Posterior cingulate gyrus (tissue), 11 donors: ENCODE measurements at regions of chr19 and their contacts with region 1.

Region 1: GRCh38 chr19:50777754-50778303 is 7.6 kb downstream of the GPR32 start:
- DNase-seq: peak in 1 of 10 donors; percentile 81

Region 2: GRCh38 chr19:50368649-50369570 is 408.9 kb before region 1 on chr19:
- intact Hi-C with region 1: loop called (anchors 1 kb)
- DNase-seq: peak; percentile 76 to 97 (median 88)

Region 3: GRCh38 chr19:50607874-50608785 is 169.7 kb before region 1 on chr19:
- intact Hi-C with region 1: loop called (anchors 1 kb)
- DNase-seq: peak; percentile 94 to 100 (median 99)

Region 4: GRCh38 chr19:50705422-50706019 is 72.3 kb before region 1 on chr19:
- intact Hi-C with region 1: loop called (anchors 5 kb)
- DNase-seq: peak in 1 of 10 donors; percentile 88

Region 5: GRCh38 chr19:50724522-50725217 is 53.2 kb before region 1 on chr19:
- intact Hi-C with region 1: loop called (anchors 5 kb)
- DNase-seq: peak; percentile 99 to 100 (median 99)

Region 6: DNA sequence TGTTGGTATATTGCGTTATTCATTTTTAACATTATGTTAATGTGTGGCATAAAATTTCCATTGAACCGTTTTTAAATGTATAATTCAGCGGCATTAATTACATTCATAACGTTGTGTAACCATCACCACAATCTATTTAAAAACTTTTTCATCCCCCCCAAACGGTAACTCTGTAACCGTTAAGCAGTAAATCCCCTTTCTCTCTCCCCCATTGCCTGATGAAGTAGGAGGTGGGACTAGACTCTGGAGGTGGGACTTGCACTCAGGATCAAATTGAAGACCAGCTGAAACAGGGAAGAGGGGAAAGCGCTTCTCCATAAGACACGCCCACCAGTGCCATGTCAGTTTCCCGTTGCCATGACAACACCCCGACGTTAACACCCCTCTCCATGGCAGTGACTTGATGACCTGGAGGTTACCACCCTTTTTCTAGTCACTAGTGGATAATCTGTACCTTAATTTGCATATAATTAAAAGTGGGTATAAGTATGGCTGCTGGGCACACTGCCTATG is 37.9 kb before region 1 on chr19:
- intact Hi-C with region 1: no loop called
- DNase-seq: peak in 2 of 10 donors; percentile 2 to 18

Region 7: GRCh38 chr19:50794439-50795237 is 16.8 kb after region 1 on chr19:
- intact Hi-C with region 1: no loop called
- DNase-seq: peak in 2 of 10 donors; percentile 69 to 80

Region 8: DNA sequence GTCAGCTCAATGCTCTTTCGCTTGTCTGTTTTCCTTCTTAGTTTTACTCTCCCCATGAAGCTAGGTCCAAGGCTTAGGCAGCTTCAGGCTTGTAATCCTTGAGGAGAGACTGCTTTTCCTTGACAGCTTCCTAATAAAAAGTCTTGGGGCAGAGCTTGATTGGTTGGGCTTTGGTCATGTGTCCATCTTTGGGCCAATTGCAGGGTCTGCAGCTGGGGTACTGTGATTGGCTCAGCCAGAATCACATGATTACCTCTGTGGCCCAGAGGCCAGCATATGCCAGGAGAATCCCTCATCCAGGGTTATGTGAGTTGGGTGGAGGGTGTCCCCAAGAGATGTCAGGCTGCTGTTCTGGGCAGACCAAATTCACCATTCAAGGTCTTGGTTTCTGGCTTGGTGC is 37.6 kb after region 1 on chr19:
- intact Hi-C with region 1: no loop called
- DNase-seq: peak in 1 of 10 donors; percentile 3